Head of caudate nucleus (tissue), 42 donors: ENCODE measurements at regions of chr11 and their contacts with region 1.

Region 1: DNA sequence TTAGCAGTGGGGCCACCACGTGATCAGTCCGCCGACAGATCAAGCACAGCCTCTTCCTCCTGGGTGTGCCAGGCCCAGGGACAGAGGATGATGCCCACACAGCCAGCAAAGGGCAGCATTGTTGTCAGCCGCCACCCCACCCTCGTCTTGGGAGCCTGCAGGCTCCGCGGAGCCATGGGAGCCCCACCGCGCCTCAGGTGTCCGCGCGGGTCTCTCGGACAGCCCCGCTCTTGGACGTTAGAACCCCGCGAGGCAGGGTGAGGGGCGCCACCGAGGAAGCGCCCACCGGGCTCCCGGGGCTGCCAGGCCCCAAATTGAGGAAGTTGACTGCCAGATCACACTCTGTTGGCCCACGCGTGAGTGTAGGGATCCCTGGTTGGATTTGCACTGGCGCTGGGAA is 83.9 kb upstream of the MS4A8 start:
- DNase-seq: no peak

Region 2: DNA sequence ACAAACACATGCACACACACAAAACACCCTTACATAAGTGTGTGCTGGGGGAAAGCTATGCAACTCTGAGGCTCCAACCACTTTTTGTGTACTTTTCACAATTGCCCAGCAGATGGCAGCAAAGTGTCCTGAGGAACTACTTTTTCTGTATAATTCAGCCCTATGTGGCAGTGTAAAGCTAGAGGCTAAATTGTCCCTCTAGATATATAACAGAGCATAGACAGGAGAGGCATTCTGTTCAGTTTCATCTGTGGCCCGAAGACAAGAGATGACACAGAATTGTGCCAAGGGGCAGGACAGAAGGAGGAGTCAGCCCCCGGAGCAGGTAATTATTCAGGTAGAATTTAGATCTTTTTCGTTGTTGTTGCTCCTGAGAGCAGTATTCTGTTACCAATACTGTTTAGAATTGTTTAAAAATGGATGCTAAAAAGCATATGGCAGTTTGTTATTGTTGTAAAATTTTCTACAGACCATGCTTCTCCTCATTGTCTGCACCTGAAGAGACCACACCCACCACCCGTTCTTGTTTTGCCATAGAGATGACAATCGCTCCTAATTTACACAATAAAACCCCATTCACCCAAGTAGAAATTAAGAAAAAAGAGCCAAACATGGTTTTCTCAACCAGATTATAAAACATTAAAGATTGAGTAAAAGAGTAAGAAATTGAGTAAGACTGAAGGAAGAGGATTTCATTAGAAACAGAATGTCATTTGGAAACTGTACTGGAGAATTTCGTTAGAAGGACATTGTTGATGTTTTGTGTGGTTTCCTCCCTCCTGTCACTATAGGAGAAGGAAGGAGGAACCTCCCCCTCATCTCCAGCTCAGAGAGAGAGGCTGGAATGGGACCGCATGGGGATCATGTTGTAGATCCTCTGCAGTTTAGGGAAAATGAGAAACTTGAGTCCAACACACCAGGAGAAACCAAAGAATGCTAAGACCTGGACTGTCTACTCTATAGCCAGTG is 251.7 kb before region 1 on chr11:
- intact Hi-C with region 1: loop called (anchors 10 kb)
- DNase-seq: peak in 41 of 42 donors; percentile 6 to 87 (median 63)